ENCODE measurements at regions of chr5 and their contacts with region 1.

Region 1: GRCh38 chr5:141186897-141187512 is at the start of gene PCDHB9:
- DNase-seq: peak; percentile 63
- ATAC-seq: no peak
- H3K4me3 Mint-ChIP-seq: peak within 1 kb of the TSS; percentile 42
- H3K27ac Mint-ChIP-seq: no peak within 1 kb of the TSS
- H3K4me1 Mint-ChIP-seq: peaks cover 4% of the 10 kb centered on the region
- H3K27me3 Mint-ChIP-seq: peaks cover 54% of the 10 kb centered on the region
- total RNA-seq, gene PCDHB9: not detected

Region 2: DNA sequence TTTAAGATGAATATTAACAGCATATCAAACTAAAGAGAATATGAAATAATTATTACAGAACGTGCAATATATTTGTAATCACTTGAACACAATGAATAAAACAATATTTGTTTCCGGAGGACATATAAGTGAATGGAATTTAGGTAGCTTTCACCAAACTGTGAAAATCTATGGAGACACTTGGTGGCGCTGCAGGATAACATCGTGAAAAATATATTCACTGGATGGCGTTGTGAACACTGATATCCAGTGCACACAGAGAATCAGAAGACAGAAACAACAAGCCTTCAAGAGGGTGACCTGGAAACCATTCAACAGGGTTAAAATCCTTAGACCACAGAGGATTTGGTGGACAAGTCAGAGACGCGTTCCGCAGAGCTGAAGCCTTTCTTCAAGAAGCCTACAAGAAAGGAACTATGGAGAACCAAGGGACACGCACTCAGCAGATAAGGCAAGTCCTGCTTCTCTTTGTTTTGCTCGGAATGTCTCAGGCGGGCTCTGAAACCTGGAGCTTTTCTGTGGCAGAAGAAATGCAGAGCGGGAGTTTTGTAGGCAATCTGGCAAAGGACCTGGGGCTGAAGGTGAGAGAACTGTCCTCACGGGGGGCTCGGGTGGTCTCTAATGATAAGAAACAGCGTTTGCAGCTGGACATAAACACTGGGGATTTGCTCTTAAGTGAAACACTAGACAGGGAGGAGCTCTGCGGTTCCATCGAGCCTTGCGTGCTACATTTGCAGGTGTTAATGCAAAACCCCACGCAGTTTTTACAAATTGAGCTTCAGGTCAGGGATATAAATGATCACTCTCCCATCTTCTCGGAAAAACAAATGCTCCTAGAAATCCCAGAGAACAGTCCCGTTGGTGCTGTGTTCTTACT is 12.6 kb after region 1 on chr5 and contains the start of gene PCDHB11:
- CTCF ChIA-PET with region 1: interaction called, 10 read pairs
- POLR2A ChIA-PET with region 1: no interaction called
- intact Hi-C with region 1: no loop called
- DNase-seq: peak; percentile 20
- ATAC-seq: no peak
- H3K4me3 Mint-ChIP-seq: no peak within 1 kb of the TSS
- H3K27ac Mint-ChIP-seq: no peak within 1 kb of the TSS
- H3K4me1 Mint-ChIP-seq: no peaks in the 10 kb centered on the region
- H3K27me3 Mint-ChIP-seq: peaks cover 39% of the 10 kb centered on the region
- total RNA-seq, gene PCDHB11: not detected

Region 3: GRCh38 chr5:141236516-141237313 is 49.7 kb after region 1 on chr5:
- CTCF ChIA-PET with region 1: no interaction called
- POLR2A ChIA-PET with region 1: no interaction called
- intact Hi-C with region 1: no loop called
- DNase-seq: no peak
- ATAC-seq: no peak
- H3K4me3 Mint-ChIP-seq: no peak overlapping the region
- H3K27ac Mint-ChIP-seq: no peak overlapping the region
- H3K4me1 Mint-ChIP-seq: no peaks in the 10 kb centered on the region
- H3K27me3 Mint-ChIP-seq: peaks cover 50% of the 10 kb centered on the region

Measured in activated CD4-positive, alpha-beta T cell treated with anti-CD3 and anti-CD28 coated beads for 36 hours (primary cell).